ENCODE measurements at regions of chr3 and their contacts with region 1.

Region 1: DNA sequence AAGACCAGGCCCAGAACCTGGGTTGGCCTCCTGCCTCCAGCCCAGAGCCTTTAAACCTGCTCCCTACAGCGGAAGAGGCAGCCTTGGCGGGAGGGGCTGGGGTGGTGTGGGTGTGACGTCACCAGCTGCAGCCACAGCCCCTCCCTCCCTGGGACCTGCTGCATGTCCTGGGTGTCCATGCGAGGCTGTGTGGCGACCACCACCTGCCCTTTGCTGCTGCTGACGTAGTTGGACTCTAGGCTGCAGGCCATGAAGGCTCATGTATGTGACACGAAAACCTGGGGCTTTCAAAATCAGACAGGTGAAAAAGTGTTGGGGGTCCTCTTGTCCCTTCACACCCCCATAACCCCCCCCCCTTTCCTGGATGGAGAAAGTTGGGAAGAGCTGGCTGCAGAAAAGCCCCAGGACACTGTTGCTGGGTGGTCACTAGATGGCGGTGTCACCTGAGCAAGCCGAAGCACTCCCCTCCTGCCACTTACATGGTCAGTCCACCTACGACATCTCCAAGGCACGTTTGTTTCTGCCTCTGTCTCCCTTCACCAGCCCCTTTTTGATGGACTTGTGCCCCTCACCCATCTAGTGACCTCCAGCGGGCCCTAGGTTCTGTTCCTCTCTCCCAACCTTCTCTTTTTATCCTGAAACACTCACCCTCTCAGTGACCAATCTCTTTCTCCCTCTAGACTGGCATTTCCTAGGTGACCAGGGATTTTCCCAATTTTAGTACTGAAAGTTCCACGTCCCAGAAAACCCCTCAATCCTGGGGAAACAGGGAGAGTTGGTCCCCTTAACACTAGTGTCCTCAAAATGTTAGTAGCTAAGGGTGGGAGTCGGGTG is 35.2 kb downstream of the SLC6A20 start:
- DNase-seq: peak in 6 of 9 experiments; percentile 22 to 72 (median 55)
- ATAC-seq: peak; percentile 62
- H3K4me3 ChIP-seq: no peak overlapping the region
- H3K4me3 Mint-ChIP-seq: no peak overlapping the region
- H3K27ac ChIP-seq: no peak overlapping the region
- H3K27ac Mint-ChIP-seq: no peak overlapping the region
- H3K4me1 ChIP-seq: no peaks in the 10 kb centered on the region
- H3K4me1 Mint-ChIP-seq: peaks cover 3% of the 10 kb centered on the region
- H3K27me3 ChIP-seq: no peaks in the 10 kb centered on the region
- H3K27me3 Mint-ChIP-seq: peaks cover 3% of the 10 kb centered on the region
- CTCF ChIP-seq: peak; percentile 45

Region 2: GRCh38 chr3:45795882-45796765 is 35.0 kb after region 1 on chr3 and contains the start of gene SLC6A20:
- CTCF ChIA-PET with region 1: no interaction called
- POLR2A ChIA-PET with region 1: no interaction called
- intact Hi-C with region 1: no loop called
- DNase-seq: peak in 4 of 9 experiments; percentile 2 to 49 (median 20)
- ATAC-seq: peak; percentile 57
- H3K4me3 ChIP-seq: peak within 1 kb of the TSS; percentile 28 to 44
- H3K4me3 Mint-ChIP-seq: peak within 1 kb of the TSS; percentile 78
- H3K27ac ChIP-seq: no peak within 1 kb of the TSS
- H3K27ac Mint-ChIP-seq: peak within 1 kb of the TSS; percentile 47
- H3K4me1 ChIP-seq: peaks cover 13% of the 10 kb centered on the region
- H3K4me1 Mint-ChIP-seq: peaks cover 10% of the 10 kb centered on the region
- H3K27me3 ChIP-seq: peaks cover 12 to 17% of the 10 kb centered on the region in 2 experiments
- H3K27me3 Mint-ChIP-seq: peaks cover 50% of the 10 kb centered on the region
- CTCF ChIP-seq: no peak
- total RNA-seq, gene SLC6A20: 0.11 TPM in 1 of 2 experiments, not detected in the other

Region 3: DNA sequence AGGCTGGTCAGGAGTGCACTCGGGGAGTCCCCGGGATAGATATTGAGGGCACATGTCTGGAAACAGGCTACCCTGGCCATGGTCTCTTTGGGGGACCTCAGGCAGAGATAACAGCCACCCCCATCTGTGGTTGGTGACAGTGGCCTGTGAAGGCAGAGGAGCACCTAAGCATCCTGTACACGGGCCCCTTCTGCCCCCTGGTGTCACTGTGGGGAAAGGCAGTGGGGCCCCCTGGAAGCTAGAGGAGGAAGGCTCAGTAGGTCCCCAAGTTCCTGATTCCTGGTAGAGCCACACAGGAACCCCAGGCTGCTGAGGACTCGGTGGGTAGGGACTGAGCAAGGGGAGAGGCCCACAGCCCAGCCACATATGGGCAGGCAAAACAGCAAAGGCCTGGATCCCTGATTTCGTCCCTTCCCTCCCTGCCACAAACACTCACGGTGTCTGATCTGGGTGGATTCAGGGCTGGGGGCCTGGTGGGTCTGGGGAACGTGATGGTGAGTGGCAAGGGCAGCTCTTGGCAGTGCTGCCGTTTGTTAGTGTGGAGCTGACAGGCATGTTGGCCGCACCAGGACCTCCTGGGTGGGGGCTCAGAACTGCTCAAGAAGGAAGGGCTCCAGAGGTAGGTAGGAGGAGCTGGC is 168.1 kb after region 1 on chr3:
- CTCF ChIA-PET with region 1: interaction called, 84 read pairs
- POLR2A ChIA-PET with region 1: no interaction called
- intact Hi-C with region 1: loop called in 1 of 2 experiments (anchors 1 kb)
- DNase-seq: peak; percentile 39 to 78 (median 66)
- ATAC-seq: peak; percentile 97
- H3K4me3 ChIP-seq: no peak overlapping the region
- H3K4me3 Mint-ChIP-seq: no peak overlapping the region
- H3K27ac ChIP-seq: no peak overlapping the region
- H3K27ac Mint-ChIP-seq: peak overlapping the region; percentile 63
- H3K4me1 ChIP-seq: no peaks in the 10 kb centered on the region
- H3K4me1 Mint-ChIP-seq: peaks cover 4% of the 10 kb centered on the region
- H3K27me3 ChIP-seq: no peaks in the 10 kb centered on the region
- H3K27me3 Mint-ChIP-seq: no peaks in the 10 kb centered on the region
- CTCF ChIP-seq: peak; percentile 72

Region 4: GRCh38 chr3:46378426-46378942 is 617.4 kb after region 1 on chr3:
- CTCF ChIA-PET with region 1: interaction called, 4 read pairs
- POLR2A ChIA-PET with region 1: no interaction called
- intact Hi-C with region 1: loop called in 1 of 2 experiments (anchors 10 kb)
- DNase-seq: peak; percentile 26 to 76 (median 64)
- ATAC-seq: peak; percentile 53
- H3K4me3 ChIP-seq: no peak overlapping the region
- H3K4me3 Mint-ChIP-seq: no peak overlapping the region
- H3K27ac ChIP-seq: no peak overlapping the region
- H3K27ac Mint-ChIP-seq: peak overlapping the region; percentile 28
- H3K4me1 ChIP-seq: peaks cover 33% of the 10 kb centered on the region
- H3K4me1 Mint-ChIP-seq: peaks cover 60% of the 10 kb centered on the region
- H3K27me3 ChIP-seq: no peaks in the 10 kb centered on the region
- H3K27me3 Mint-ChIP-seq: no peaks in the 10 kb centered on the region
- CTCF ChIP-seq: peak; percentile 55

Measured in CD8-positive, alpha-beta T cell (primary cell).